Naive thymus-derived CD4-positive, alpha-beta T cell (primary cell): ENCODE measurements at regions of chr17 and their contacts with region 1.

Region 1: GRCh38 chr17:43994272-43995149 is 9.9 kb upstream of the NAGS start:
- DNase-seq: peak; percentile 40 to 74 (median 63)
- ATAC-seq: peak; percentile 94
- H3K4me3 ChIP-seq: peak overlapping the region; percentile 7
- H3K4me3 Mint-ChIP-seq: peak overlapping the region in 5 of 10 donors; percentile 11 to 59 (median 31)
- H3K27ac ChIP-seq: no peak overlapping the region
- H3K27ac Mint-ChIP-seq: no peak overlapping the region
- H3K4me1 ChIP-seq: peaks cover 6 to 9% of the 10 kb centered on the region in 2 donors
- H3K4me1 Mint-ChIP-seq: no peaks in the 10 kb centered on the region
- H3K27me3 ChIP-seq: peaks cover 3 to 4% of the 10 kb centered on the region in 2 donors
- H3K27me3 Mint-ChIP-seq: peaks cover 0 to 35% (median 13%) of the 10 kb centered on the region in 5 donors

Region 2: GRCh38 chr17:43907425-43907981 is 87.0 kb before region 1 on chr17 and contains the start of gene MPP2:
- CTCF ChIA-PET with region 1: interaction called, 5 read pairs
- POLR2A ChIA-PET with region 1: interaction called, 6 read pairs
- intact Hi-C with region 1: loop called in 1 of 2 experiments (anchors 1 kb)
- DNase-seq: peak; percentile 28 to 76 (median 68)
- ATAC-seq: peak; percentile 73
- H3K4me3 ChIP-seq: peak within 1 kb of the TSS; percentile 78
- H3K4me3 Mint-ChIP-seq: peak within 1 kb of the TSS; percentile 70 to 95 (median 89)
- H3K27ac ChIP-seq: peak within 1 kb of the TSS; percentile 80
- H3K27ac Mint-ChIP-seq: peak within 1 kb of the TSS in 8 of 9 donors; percentile 45 to 95 (median 89)
- H3K4me1 ChIP-seq: peaks cover 17 to 20% of the 10 kb centered on the region in 2 donors
- H3K4me1 Mint-ChIP-seq: peaks cover 0 to 16% (median 12%) of the 10 kb centered on the region in 7 donors
- H3K27me3 ChIP-seq: peaks cover 0 to 4% of the 10 kb centered on the region in 2 donors
- H3K27me3 Mint-ChIP-seq: peaks cover 0 to 63% (median 5%) of the 10 kb centered on the region in 5 donors
- total RNA-seq, gene MPP2: 0.24 to 9.3 (median 3.7) TPM

Region 3: DNA sequence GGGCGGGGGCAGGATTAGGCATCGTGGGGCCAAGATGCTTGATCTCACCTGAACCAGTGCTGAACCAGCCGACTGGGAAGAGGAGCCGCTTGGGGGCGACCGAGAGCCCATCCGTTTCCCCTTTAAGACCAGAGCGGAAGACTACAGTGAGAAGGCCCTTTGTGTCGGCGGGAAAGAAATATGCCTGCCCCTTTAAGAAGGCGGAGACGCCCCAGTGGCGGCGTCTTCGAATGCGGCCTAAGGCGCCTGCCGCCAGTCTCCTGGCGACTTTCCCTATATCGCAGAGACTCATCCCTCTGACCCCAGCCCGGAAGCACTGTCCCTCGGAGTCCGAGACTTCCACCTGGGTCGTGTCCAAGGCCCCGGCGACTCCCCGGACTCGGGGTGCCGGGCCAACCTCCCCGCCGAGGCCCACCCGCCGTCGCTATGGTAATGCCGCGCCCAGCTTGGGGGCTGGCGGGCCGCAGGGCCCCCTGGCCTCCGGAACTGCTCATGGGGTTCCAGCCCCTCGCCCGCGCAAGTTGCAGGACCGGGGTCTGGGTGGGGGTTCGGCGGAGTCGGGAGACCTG is 147.3 kb after region 1 on chr17 and contains the start of gene HROB:
- CTCF ChIA-PET with region 1: no interaction called
- POLR2A ChIA-PET with region 1: no interaction called
- intact Hi-C with region 1: no loop called
- DNase-seq: peak; percentile 96 to 100 (median 98)
- ATAC-seq: peak; percentile 98
- H3K4me3 ChIP-seq: peak within 1 kb of the TSS; percentile 84
- H3K4me3 Mint-ChIP-seq: peak within 1 kb of the TSS; percentile 82 to 89 (median 84)
- H3K27ac ChIP-seq: peak within 1 kb of the TSS; percentile 84
- H3K27ac Mint-ChIP-seq: peak within 1 kb of the TSS; percentile 65 to 91 (median 87)
- H3K4me1 ChIP-seq: peaks cover 0 to 9% of the 10 kb centered on the region in 2 donors
- H3K4me1 Mint-ChIP-seq: peaks cover 0 to 32% (median 12%) of the 10 kb centered on the region in 7 donors
- H3K27me3 ChIP-seq: no peaks in the 10 kb centered on the region
- H3K27me3 Mint-ChIP-seq: peaks cover 0 to 5% (median 0%) of the 10 kb centered on the region in 5 donors
- total RNA-seq, gene HROB: 0.76 to 12.3 (median 2.1) TPM

Region 4: GRCh38 chr17:44221077-44221861 is 226.8 kb after region 1 on chr17:
- CTCF ChIA-PET with region 1: no interaction called
- POLR2A ChIA-PET with region 1: no interaction called
- intact Hi-C with region 1: no loop called
- DNase-seq: peak; percentile 41 to 74 (median 68)
- ATAC-seq: peak; percentile 31
- H3K4me3 ChIP-seq: peak overlapping the region; percentile 96
- H3K4me3 Mint-ChIP-seq: peak overlapping the region; percentile 93 to 99 (median 96)
- H3K27ac ChIP-seq: peak overlapping the region; percentile 90
- H3K27ac Mint-ChIP-seq: peak overlapping the region; percentile 93 to 99 (median 95)
- H3K4me1 ChIP-seq: peaks cover 15 to 20% of the 10 kb centered on the region in 2 donors
- H3K4me1 Mint-ChIP-seq: peaks cover 23 to 30% (median 25%) of the 10 kb centered on the region in 7 donors
- H3K27me3 ChIP-seq: no peaks in the 10 kb centered on the region
- H3K27me3 Mint-ChIP-seq: peaks cover 0 to 2% (median 0%) of the 10 kb centered on the region in 5 donors

Region 5: DNA sequence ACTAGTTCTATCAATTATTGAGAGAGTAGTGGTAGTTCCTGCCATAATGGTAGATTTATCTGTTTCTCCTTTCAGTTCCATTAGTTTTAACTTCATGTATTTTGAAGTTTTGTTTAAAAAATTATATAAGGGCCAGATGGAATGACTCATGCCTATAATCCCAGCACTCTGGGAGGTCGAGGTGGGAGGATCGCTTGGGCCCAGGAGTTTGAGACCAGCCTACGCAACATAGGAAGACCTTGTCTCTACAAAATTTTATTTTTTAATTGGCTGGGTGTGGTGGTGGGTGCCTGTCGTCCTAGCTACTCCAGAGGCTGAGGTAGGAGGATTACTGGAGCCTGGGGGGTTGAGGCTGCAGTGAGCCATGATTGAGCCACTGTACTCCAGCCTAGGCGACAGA is 239.1 kb after region 1 on chr17:
- CTCF ChIA-PET with region 1: no interaction called
- POLR2A ChIA-PET with region 1: no interaction called
- intact Hi-C with region 1: no loop called
- DNase-seq: no peak
- ATAC-seq: no peak
- H3K4me3 ChIP-seq: no peak overlapping the region
- H3K4me3 Mint-ChIP-seq: no peak overlapping the region
- H3K27ac ChIP-seq: no peak overlapping the region
- H3K27ac Mint-ChIP-seq: no peak overlapping the region
- H3K4me1 ChIP-seq: no peaks in the 10 kb centered on the region
- H3K4me1 Mint-ChIP-seq: peaks cover 0 to 8% (median 4%) of the 10 kb centered on the region in 7 donors
- H3K27me3 ChIP-seq: no peaks in the 10 kb centered on the region
- H3K27me3 Mint-ChIP-seq: peaks cover 0 to 8% (median 0%) of the 10 kb centered on the region in 5 donors